H1 (cell line): ENCODE measurements at regions of chr14 and their contacts with region 1.

Region 1: GRCh38 chr14:91350813-91351511 is 66.7 kb downstream of the CCDC88C start:
- DNase-seq: no peak
- H3K4me3 ChIP-seq: no peak overlapping the region
- H3K27ac ChIP-seq: no peak overlapping the region
- H3K4me1 ChIP-seq: peaks cover 6 to 29% (median 15%) of the 10 kb centered on the region in 4 experiments
- H3K27me3 ChIP-seq: no peaks in the 10 kb centered on the region
- CTCF ChIP-seq: no peak
- EP300 ChIP-seq: no peak
- POLR2A ChIP-seq: no peak
- RAD21 ChIP-seq: no peak

Region 2: DNA sequence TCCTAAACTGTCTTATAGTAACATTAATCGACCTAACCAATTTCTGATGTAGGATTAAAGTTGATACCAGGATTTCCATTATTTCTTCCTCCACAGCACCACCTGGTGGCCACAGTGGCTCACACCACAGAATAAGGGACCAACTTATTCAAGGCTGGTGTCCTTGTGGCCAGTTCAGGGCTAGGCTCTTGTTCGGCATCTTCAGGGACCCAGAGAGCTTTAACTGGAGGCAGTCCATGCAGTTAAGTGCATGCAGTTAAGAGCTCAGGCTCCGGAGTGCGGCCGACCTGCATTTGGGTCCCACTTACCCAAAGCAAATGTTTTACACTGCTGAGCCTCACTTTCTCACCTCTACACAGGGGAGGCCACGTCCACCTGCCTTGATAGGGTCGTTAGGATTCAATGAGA is 64.4 kb before region 1 on chr14:
- CTCF ChIA-PET with region 1: no interaction called
- POLR2A ChIA-PET with region 1: no interaction called
- DNase-seq: peak; percentile 65 to 89
- H3K4me3 ChIP-seq: no peak overlapping the region
- H3K27ac ChIP-seq: no peak overlapping the region
- H3K4me1 ChIP-seq: no peaks in the 10 kb centered on the region
- H3K27me3 ChIP-seq: no peaks in the 10 kb centered on the region
- CTCF ChIP-seq: peak; percentile 65 to 97 (median 96)
- EP300 ChIP-seq: no peak
- POLR2A ChIP-seq: no peak
- RAD21 ChIP-seq: peak; percentile 72 to 81

Region 3: DNA sequence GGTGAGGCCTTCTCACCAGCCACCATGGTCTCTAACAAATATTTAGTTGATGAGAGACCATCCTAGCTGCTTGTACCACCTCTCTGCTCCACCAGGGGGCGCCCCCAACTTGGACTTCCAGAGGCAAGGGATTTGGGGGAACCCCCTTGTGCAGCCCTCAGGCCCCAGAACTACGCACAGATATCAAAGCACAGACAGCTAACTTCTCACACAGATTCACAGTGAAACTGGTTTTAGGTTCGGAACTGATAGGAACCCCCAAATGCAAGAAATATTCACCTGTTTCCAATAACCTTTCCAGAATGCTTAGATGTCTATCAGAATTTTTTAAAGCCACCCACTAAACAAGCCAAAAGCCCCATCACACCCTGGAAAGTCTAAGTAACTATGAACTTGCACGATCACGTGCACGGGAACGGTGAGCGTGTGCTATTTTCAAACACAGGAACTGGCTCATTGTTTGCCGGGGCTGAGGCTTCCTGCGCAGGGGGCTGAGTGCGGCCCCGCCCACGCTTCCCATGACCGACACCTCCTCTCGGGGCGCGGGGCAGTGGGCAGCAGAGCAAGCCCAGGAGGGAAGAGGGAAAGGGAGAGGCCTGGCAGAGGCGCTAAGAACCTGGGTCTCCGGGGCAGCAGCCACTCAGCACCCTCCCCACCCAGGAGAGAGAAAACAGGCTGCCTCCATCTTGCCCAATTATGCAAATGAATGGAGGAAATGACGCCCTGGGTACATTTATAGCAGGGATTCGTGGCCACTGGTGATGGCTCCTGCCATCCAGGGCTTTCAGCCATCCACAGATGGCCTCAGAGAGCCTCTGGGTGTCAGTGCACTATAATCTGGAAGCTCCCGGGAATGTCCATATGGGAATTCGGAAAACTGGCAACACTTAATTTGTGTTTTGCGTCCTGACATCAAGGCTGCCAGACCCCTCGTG is 27.0 kb before region 1 on chr14:
- CTCF ChIA-PET with region 1: interaction called, 40 read pairs
- POLR2A ChIA-PET with region 1: interaction called, 4 read pairs
- DNase-seq: peak; percentile 47 to 98
- H3K4me3 ChIP-seq: no peak overlapping the region
- H3K27ac ChIP-seq: no peak overlapping the region
- H3K4me1 ChIP-seq: peaks cover 0 to 2% (median 0%) of the 10 kb centered on the region in 4 experiments; a peak in 2 of 7 replicates
- H3K27me3 ChIP-seq: no peaks in the 10 kb centered on the region
- CTCF ChIP-seq: peak; percentile 80 to 90 (median 85)
- EP300 ChIP-seq: no peak
- POLR2A ChIP-seq: no peak
- RAD21 ChIP-seq: peak; percentile 89 to 95

Region 4: GRCh38 chr14:91361233-91362063 is 10.5 kb after region 1 on chr14:
- CTCF ChIA-PET with region 1: interaction called, 135 read pairs
- POLR2A ChIA-PET with region 1: no interaction called
- DNase-seq: no peak
- H3K4me3 ChIP-seq: no peak overlapping the region
- H3K27ac ChIP-seq: no peak overlapping the region
- H3K4me1 ChIP-seq: peaks cover 0 to 12% (median 8%) of the 10 kb centered on the region in 4 experiments; a peak in 6 of 7 replicates
- H3K27me3 ChIP-seq: no peaks in the 10 kb centered on the region
- CTCF ChIP-seq: no peak
- EP300 ChIP-seq: no peak
- POLR2A ChIP-seq: no peak
- RAD21 ChIP-seq: no peak

Region 5: DNA sequence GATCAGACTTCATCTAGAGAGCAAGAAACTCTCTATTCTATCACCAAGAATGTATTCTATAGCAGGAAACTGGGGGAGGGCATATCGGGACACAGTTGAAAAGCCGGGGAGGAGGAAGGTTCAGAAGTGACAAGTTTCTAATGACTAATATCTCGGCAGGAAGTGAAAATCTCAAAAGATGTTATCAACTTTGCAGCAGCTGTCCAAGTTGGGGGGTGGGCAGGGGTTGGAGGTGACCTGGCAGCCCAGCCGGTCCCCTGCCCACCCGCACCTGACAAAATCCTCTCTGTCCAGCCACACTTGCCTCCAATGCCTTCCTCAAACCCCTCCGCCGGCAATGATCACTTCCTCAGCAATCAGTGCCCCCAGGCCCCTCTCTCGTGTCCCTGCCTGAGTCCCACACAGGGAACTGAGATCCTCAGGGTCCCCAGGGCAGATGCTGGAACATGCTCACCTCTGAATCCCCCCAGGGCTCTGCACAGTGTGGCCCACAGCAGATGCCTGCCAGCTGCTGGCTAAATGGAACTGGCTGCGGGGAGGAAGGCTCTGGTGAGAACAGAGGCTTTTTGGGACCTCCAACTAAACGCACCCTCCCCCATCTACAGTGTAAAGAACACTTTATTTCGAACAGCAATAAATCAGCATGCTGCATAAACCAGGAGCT is 22.8 kb after region 1 on chr14:
- CTCF ChIA-PET with region 1: interaction called, 44 read pairs
- POLR2A ChIA-PET with region 1: interaction called, 4 read pairs
- DNase-seq: no peak
- H3K4me3 ChIP-seq: no peak overlapping the region
- H3K27ac ChIP-seq: no peak overlapping the region
- H3K4me1 ChIP-seq: peaks cover 6 to 61% (median 36%) of the 10 kb centered on the region in 4 experiments
- H3K27me3 ChIP-seq: no peaks in the 10 kb centered on the region
- CTCF ChIP-seq: no peak
- EP300 ChIP-seq: no peak
- POLR2A ChIP-seq: no peak
- RAD21 ChIP-seq: no peak

Region 6: GRCh38 chr14:91396959-91397815 is 46.2 kb after region 1 on chr14:
- CTCF ChIA-PET with region 1: interaction called, 14 read pairs
- POLR2A ChIA-PET with region 1: no interaction called
- DNase-seq: peak in 1 of 2 experiments; percentile 67
- H3K4me3 ChIP-seq: no peak overlapping the region
- H3K27ac ChIP-seq: no peak overlapping the region
- H3K4me1 ChIP-seq: peaks cover 35 to 66% (median 51%) of the 10 kb centered on the region in 4 experiments
- H3K27me3 ChIP-seq: no peaks in the 10 kb centered on the region
- CTCF ChIP-seq: no peak
- EP300 ChIP-seq: no peak
- POLR2A ChIP-seq: no peak
- RAD21 ChIP-seq: no peak

Region 7: DNA sequence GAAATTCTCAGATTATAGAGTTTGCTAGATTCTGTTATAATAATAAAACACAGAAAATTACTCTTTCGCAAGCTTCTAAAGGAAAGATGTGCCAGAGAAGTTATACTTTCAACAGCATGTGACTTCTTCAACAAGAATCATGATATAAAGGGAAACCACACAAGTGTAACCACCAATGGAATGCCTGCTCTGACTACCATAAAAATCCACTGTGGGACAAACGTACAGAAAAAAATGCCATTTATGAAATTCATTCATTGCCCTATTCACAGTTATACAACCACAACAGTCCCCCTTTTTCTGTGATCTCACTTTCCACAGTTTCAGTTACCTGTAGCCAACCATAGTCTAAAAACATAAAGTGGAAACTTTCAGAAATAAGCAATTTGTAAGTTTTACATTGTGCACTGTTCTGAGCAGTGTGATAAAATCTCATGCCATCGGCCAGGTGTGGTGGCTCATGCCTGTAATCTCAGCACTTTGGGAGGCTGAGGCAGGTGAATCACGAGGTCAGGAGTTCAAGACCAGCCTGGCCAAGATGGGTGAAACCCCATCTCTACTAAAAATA is 377.7 kb after region 1 on chr14:
- CTCF ChIA-PET with region 1: no interaction called
- POLR2A ChIA-PET with region 1: no interaction called
- DNase-seq: no peak
- H3K4me3 ChIP-seq: no peak overlapping the region
- H3K27ac ChIP-seq: no peak overlapping the region
- H3K4me1 ChIP-seq: no peaks in the 10 kb centered on the region
- H3K27me3 ChIP-seq: no peaks in the 10 kb centered on the region
- CTCF ChIP-seq: no peak
- EP300 ChIP-seq: no peak
- POLR2A ChIP-seq: no peak
- RAD21 ChIP-seq: no peak